ENCODE measurements at regions of chr1 and their contacts with region 1.

Region 1: GRCh38 chr1:215992620-215993019 is 425.5 kb downstream of the KCTD3 start:
- DNase-seq: peak; percentile 8
- H3K4me3 ChIP-seq: no peak overlapping the region
- H3K27ac ChIP-seq: no peak overlapping the region
- H3K4me1 ChIP-seq: no peaks in the 10 kb centered on the region
- H3K27me3 ChIP-seq: peaks cover 2% of the 10 kb centered on the region
- CTCF ChIP-seq: peak; percentile 27 to 47

Region 2: DNA sequence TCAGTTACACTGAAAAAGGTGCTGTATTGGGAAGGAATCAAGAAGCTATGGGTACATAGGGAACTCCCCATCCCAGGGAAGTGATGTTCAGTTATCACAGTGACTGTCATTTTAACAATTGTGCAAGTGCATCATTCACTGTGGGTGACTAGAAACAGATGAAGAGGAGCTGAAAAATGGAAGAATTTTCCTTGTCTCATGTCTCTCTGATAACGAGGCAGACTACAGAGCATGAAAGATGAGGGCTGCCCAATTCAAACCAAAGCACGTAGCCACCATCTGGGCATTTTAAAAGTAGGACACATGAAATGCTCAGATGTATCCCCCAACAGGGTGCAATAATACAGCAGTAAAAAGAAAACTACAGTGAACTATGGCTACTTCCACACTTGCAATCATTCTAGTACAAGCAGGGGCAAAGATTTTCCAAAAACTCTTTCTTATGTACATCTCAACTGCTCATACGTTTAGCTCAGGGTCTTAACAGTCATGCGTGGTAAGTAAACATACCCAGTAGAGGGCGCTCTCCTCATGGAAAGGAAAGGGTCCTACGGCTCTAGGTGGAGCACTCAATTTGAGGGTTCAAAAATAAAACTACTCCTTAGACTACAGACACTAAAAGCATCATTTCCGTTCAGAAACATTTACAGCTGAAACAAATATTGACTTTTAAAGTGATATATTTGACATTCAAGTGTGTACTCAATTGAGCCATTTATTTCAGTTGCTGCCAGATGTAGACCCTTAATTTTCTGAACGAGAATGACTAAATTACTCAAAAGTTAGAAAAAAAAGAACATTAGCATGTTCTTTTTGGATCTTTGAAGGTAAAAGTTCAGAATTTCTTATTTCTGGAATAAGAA is 282.4 kb before region 1 on chr1:
- CTCF ChIA-PET with region 1: no interaction called
- dilution Hi-C with region 1: no loop called
- in situ Hi-C with region 1: no loop called
- intact Hi-C with region 1: loop called (anchors 5 kb)
- DNase-seq: peak; percentile 43
- H3K4me3 ChIP-seq: no peak overlapping the region
- H3K27ac ChIP-seq: no peak overlapping the region
- H3K4me1 ChIP-seq: no peaks in the 10 kb centered on the region
- H3K27me3 ChIP-seq: no peaks in the 10 kb centered on the region
- CTCF ChIP-seq: peak; percentile 68 to 84

Region 3: DNA sequence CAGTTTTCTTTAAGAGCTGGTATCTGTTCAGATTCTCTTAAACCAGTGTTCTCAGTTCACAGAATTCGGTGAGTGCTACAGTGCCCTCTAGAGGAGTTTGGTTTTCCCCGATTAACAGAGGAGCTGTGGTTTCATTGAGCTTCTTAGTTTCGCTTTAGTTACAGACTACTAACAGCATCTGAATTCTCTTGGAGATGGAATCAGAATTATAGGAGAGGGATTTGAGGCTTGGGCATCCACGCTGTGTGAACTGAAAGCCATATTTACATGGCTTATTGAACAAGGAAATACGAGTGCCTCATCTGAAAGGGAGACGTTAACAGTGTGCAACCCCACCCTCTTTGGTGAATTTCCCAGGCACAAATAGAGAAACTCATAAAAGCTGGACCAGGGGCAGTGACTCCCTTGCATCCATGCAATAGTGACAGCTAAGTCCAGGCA is 228.7 kb after region 1 on chr1:
- CTCF ChIA-PET with region 1: interaction called, 3 read pairs
- dilution Hi-C with region 1: no loop called
- in situ Hi-C with region 1: no loop called
- intact Hi-C with region 1: loop called (anchors 5 kb)
- DNase-seq: peak; percentile 67
- H3K4me3 ChIP-seq: peak overlapping the region; percentile 44 to 56 (median 51)
- H3K27ac ChIP-seq: no peak overlapping the region
- H3K4me1 ChIP-seq: no peaks in the 10 kb centered on the region
- H3K27me3 ChIP-seq: no peaks in the 10 kb centered on the region
- CTCF ChIP-seq: peak; percentile 70 to 80

Region 4: GRCh38 chr1:216742625-216743024 is 750.0 kb after region 1 on chr1:
- CTCF ChIA-PET with region 1: no interaction called
- dilution Hi-C with region 1: no loop called
- in situ Hi-C with region 1: no loop called
- intact Hi-C with region 1: loop called (anchors 10 kb)
- DNase-seq: no peak
- H3K4me3 ChIP-seq: no peak overlapping the region
- H3K27ac ChIP-seq: no peak overlapping the region
- H3K4me1 ChIP-seq: no peaks in the 10 kb centered on the region
- H3K27me3 ChIP-seq: no peaks in the 10 kb centered on the region
- CTCF ChIP-seq: peak in 1 of 2 donors; percentile 44